Activated CD4-positive, alpha-beta memory T cell treated with anti-CD3 and anti-CD28 coated beads for 36 hours (primary cell): ENCODE measurements at regions of chrX and their contacts with region 1.

Region 1: DNA sequence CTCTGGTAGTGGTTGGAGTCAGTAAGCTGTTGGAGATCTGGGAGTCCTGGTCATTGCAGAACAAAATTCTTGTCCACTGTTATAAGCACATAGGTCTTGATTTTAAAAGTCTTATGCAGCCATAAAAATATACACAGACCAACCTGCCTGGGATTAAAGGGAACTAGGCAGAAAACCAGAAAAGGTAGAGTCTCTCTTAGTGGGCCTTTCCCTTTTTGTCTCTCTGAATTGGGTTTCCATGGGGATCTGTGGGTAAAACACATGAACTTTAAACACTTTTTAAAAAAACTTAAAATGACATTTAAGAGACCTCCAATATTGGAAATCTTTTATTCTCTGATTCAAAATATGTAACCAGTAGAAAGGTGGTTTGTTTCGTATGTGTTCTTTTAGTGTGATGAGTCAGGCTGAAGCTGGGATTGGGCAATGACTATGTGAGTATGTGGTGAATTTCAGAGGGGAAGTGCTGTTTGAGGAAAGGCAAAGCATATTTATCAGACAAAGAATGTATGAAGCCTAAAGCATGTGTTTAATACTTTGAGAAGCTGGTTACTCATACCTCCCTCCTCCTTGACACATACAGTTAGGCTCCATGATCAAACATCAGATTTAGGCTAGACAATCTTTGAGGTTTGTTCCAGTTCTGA is 29.6 kb downstream of the SLC16A2 start:
- DNase-seq: peak; percentile 40
- H3K4me3 Mint-ChIP-seq: no peak overlapping the region
- H3K27ac Mint-ChIP-seq: peak overlapping the region; percentile 80
- H3K4me1 Mint-ChIP-seq: peaks cover 28% of the 10 kb centered on the region
- H3K27me3 Mint-ChIP-seq: no peaks in the 10 kb centered on the region

Region 2: DNA sequence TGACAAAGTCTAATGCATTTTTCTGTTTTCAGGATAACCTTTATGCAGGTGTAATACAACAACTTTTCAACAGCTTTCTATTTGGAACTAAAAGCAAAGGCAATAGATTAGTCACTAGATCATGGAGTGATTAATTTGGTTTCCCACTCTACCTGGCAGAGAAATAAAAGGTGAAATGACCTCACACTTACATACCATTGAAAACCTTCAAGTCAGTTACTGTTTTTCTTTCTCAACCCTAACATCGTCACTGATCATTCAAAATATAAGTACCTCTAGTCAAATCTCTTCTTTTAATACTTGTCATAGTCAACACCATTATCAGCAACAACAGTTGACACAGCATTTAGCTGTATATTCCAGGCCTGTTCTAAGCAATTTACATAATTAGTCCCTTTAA is 232.0 kb before region 1 on chrX:
- CTCF ChIA-PET with region 1: no interaction called
- POLR2A ChIA-PET with region 1: no interaction called
- intact Hi-C with region 1: loop called (anchors 10 kb)
- DNase-seq: no peak
- H3K4me3 Mint-ChIP-seq: no peak overlapping the region
- H3K27ac Mint-ChIP-seq: no peak overlapping the region
- H3K4me1 Mint-ChIP-seq: peaks cover 32% of the 10 kb centered on the region
- H3K27me3 Mint-ChIP-seq: no peaks in the 10 kb centered on the region

Region 3: GRCh38 chrX:74232859-74233258 is 218.1 kb before region 1 on chrX:
- CTCF ChIA-PET with region 1: no interaction called
- POLR2A ChIA-PET with region 1: no interaction called
- intact Hi-C with region 1: no loop called
- DNase-seq: no peak
- H3K4me3 Mint-ChIP-seq: no peak overlapping the region
- H3K27ac Mint-ChIP-seq: no peak overlapping the region
- H3K4me1 Mint-ChIP-seq: peaks cover 2% of the 10 kb centered on the region
- H3K27me3 Mint-ChIP-seq: no peaks in the 10 kb centered on the region

Region 4: DNA sequence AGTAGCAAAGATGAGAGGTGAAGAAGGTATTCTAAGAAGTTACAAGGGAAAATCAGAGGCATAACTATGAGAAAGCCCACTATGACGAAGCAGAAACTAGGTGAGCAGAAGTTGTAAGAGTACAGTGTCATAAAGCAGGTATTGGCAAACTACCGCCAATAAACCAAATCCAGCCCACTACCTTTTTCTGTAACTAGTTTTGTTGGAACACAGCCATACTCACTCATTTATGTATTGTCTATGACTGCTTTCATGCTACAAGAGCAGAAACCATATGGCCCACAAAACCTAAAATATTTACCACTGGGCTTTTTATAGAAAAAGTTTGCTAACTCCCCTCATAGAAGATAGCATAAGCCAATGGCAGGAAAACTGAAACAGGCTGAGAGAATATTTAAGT is 178.7 kb before region 1 on chrX:
- CTCF ChIA-PET with region 1: no interaction called
- POLR2A ChIA-PET with region 1: no interaction called
- intact Hi-C with region 1: loop called (anchors 1 kb)
- DNase-seq: no peak
- H3K4me3 Mint-ChIP-seq: no peak overlapping the region
- H3K27ac Mint-ChIP-seq: no peak overlapping the region
- H3K4me1 Mint-ChIP-seq: peaks cover 17% of the 10 kb centered on the region
- H3K27me3 Mint-ChIP-seq: no peaks in the 10 kb centered on the region

Region 5: GRCh38 chrX:74422576-74423288 is 28.2 kb before region 1 on chrX:
- CTCF ChIA-PET with region 1: no interaction called
- POLR2A ChIA-PET with region 1: no interaction called
- intact Hi-C with region 1: loop called (anchors 2 kb)
- DNase-seq: no peak
- H3K4me3 Mint-ChIP-seq: peak overlapping the region; percentile 46
- H3K27ac Mint-ChIP-seq: no peak overlapping the region
- H3K4me1 Mint-ChIP-seq: peaks cover 9% of the 10 kb centered on the region
- H3K27me3 Mint-ChIP-seq: peaks cover 13% of the 10 kb centered on the region

Region 6: DNA sequence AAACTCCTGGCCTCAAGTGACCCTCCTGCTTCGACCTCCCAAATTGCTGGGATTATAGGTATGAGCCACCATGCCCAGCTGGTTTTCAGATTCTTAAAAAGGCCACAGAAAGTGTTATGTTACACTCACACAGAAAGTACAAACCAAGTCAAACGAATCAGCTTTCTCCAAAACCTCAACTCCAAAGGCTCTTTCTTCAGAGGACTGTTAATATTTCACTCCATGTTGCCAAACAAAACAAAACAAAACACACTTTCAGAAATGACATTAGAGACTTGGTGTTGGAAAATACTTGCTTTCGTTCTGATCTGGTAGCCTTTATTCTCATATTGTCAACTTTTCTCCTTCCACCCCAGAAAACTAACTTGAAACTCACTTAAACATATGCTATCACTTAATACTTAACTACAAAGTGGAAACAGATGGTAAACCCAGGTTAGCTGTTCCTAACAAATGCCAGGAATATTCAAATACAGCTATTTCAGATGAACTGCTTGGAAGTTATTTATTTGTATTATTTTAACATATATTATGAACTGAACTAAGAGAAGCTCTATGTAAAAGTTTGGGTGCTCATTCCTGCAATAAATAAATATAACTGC is 128.8 kb after region 1 on chrX:
- CTCF ChIA-PET with region 1: interaction called, 3 read pairs
- POLR2A ChIA-PET with region 1: no interaction called
- intact Hi-C with region 1: loop called (anchors 1 kb)
- DNase-seq: peak; percentile 8
- H3K4me3 Mint-ChIP-seq: no peak overlapping the region
- H3K27ac Mint-ChIP-seq: peak overlapping the region; percentile 69
- H3K4me1 Mint-ChIP-seq: peaks cover 13% of the 10 kb centered on the region
- H3K27me3 Mint-ChIP-seq: no peaks in the 10 kb centered on the region